K562 (cell line): ENCODE measurements at regions of chr9 and their contacts with region 1.

Region 1: DNA sequence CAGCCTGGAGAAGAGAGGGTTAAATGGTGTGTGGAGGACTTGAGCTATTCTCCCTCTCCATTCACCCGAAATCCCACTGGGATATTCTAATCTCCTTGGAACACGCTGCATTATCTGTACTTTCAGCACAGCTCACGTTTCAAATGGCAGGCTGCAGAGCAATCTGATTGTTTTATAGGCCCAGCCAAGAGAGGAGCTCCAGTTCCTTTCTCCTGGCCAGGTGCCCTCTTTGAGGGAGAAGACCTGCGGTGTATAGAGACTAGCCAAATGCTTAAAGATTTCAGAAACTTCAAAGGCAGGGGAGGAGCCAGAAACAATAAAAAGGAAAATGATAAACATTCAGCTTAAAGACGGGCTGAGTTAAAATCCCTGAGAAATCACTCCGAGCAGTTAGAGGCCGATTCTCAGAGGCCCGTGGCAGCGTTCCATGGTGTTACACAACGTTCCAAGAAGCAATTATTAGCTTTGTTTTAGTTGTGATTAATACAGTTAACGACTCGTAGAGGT is 564.0 kb upstream of the KLF4 start:
- DNase-seq: peak in 1 of 4 experiments; percentile 20
- ATAC-seq: no peak
- H3K4me3 ChIP-seq: no peak overlapping the region
- H3K27ac ChIP-seq: no peak overlapping the region
- H3K4me1 ChIP-seq: peaks cover 0 to 26% of the 10 kb centered on the region in 2 experiments; a peak in 3 of 5 replicates
- H3K27me3 ChIP-seq: no peaks in the 10 kb centered on the region
- CTCF ChIP-seq: no peak
- EP300 ChIP-seq: no peak
- POLR2A ChIP-seq: no peak
- RAD21 ChIP-seq: no peak

Region 2: DNA sequence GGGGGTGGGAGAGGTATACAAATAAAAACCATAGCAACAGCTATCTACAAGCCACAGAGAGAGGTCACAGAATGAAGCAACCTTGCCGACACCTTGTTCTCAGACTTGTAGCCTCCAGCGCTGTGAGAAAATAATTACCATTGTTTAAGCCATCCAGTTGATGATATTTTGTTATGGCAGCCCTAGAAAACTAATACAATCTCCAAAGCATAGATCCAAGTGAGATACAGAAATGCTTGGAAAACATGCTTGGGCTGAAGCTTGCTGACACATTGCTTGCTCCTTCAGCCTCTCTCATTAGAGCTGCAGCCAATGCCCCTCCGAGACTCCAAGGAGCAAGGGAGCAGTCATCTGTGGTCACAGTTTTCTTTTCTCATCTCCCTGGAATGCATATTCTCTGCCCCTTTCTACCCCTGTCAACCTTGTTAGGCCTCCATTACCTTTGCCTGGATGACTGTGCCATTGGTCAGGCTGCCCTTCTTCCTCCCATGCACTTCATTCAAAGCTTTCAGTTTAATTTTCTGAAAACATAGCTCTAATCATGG is 162.6 kb before region 1 on chr9:
- CTCF ChIA-PET with region 1: no interaction called
- POLR2A ChIA-PET with region 1: no interaction called
- in situ Hi-C with region 1: no loop called
- intact Hi-C with region 1: no loop called
- DNase-seq: no peak
- ATAC-seq: no peak
- H3K4me3 ChIP-seq: no peak overlapping the region
- H3K27ac ChIP-seq: no peak overlapping the region
- H3K4me1 ChIP-seq: no peaks in the 10 kb centered on the region
- H3K27me3 ChIP-seq: peaks cover 0 to 20% of the 10 kb centered on the region in 2 experiments; a peak in 2 of 5 replicates
- CTCF ChIP-seq: no peak
- EP300 ChIP-seq: no peak
- POLR2A ChIP-seq: no peak
- RAD21 ChIP-seq: no peak

Region 3: DNA sequence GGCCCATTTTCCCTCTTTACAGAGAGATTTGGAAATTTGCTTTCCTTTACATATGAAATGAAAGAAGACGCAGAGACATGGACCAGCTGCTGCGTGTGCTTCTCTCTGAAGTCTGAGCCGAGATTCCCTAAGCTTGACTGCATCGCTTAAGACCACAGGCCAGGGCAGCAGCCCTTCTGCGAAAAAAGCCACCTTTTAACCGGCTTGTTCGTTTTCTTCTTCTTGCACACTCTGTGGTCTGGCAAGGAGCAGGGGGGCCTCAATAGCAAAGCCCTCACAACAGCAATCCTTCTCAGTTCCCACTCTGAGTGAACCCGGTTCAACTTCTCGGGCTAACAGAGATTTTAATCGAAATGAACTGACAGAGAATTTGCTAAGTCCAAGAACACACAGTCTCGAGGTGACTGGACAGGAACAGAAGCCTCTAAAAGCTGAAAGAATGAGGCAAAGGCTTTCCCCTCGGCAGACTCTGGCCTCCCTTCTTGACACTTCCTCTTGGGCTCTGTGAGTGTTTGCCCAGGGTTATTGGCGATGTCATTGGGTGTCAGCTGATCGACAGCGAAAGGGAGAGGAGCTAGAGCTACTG is 51.1 kb before region 1 on chr9:
- CTCF ChIA-PET with region 1: no interaction called
- POLR2A ChIA-PET with region 1: no interaction called
- in situ Hi-C with region 1: no loop called
- intact Hi-C with region 1: loop called (anchors 5 kb)
- DNase-seq: no peak
- ATAC-seq: peak; percentile 56
- H3K4me3 ChIP-seq: no peak overlapping the region
- H3K27ac ChIP-seq: no peak overlapping the region
- H3K4me1 ChIP-seq: no peaks in the 10 kb centered on the region; a peak in 1 of 5 replicates
- H3K27me3 ChIP-seq: peaks cover 17 to 26% of the 10 kb centered on the region in 2 experiments
- CTCF ChIP-seq: no peak
- EP300 ChIP-seq: no peak
- POLR2A ChIP-seq: no peak
- RAD21 ChIP-seq: no peak

Region 4: DNA sequence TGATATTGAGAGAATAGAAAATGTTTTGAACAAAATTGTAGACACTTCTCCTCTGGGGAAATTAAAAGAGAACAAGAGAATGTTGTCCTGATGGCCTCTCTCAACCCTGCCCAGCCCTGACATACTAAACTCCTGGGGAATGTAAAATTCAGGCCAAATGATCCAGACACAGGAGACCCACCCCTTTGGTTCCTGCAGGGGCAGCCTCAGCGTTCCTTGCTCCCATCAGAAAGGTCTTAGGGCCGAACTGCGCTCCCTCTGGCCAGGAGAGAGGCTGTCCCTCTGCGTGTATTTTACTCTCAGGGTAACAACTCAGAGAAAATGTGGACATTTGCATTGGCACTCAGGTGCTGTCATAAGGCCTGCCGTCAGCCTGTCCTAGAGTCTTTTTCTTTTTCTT is 52.3 kb after region 1 on chr9:
- CTCF ChIA-PET with region 1: no interaction called
- POLR2A ChIA-PET with region 1: no interaction called
- in situ Hi-C with region 1: no loop called
- intact Hi-C with region 1: loop called (anchors 5 kb)
- DNase-seq: peak in 2 of 4 experiments; percentile 24 to 48
- ATAC-seq: peak; percentile 76
- H3K4me3 ChIP-seq: no peak overlapping the region
- H3K27ac ChIP-seq: no peak overlapping the region
- H3K4me1 ChIP-seq: peaks cover 3 to 49% of the 10 kb centered on the region in 2 experiments; a peak in 4 of 5 replicates
- H3K27me3 ChIP-seq: no peaks in the 10 kb centered on the region
- CTCF ChIP-seq: peak; percentile 22 to 64 (median 49)
- EP300 ChIP-seq: no peak
- POLR2A ChIP-seq: no peak
- RAD21 ChIP-seq: no peak